ENCODE measurements at regions of chr5 and their contacts with region 1.

Region 1: DNA sequence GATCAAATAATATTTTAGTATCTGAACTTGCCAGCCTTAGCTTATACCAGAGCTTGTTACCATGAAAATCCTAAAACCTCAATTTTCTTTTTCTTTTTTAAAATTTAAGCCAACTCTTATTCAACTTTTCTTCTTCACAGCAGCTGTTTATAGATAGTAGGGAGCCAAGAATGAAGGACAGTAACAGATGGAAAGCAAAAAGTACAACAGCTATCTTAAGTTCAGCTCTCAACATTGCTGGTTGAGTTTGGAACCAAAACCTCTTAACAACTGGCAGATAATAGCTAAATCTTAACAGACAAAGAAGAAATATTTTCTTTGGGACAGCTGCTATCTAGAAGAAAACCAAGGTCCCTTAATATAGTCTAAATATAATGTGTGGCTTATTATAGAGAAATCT is 74.7 kb downstream of the PJA2 start:
- DNase-seq: no peak
- H3K27ac ChIP-seq: no peak overlapping the region
- CTCF ChIP-seq: no peak

Region 2: DNA sequence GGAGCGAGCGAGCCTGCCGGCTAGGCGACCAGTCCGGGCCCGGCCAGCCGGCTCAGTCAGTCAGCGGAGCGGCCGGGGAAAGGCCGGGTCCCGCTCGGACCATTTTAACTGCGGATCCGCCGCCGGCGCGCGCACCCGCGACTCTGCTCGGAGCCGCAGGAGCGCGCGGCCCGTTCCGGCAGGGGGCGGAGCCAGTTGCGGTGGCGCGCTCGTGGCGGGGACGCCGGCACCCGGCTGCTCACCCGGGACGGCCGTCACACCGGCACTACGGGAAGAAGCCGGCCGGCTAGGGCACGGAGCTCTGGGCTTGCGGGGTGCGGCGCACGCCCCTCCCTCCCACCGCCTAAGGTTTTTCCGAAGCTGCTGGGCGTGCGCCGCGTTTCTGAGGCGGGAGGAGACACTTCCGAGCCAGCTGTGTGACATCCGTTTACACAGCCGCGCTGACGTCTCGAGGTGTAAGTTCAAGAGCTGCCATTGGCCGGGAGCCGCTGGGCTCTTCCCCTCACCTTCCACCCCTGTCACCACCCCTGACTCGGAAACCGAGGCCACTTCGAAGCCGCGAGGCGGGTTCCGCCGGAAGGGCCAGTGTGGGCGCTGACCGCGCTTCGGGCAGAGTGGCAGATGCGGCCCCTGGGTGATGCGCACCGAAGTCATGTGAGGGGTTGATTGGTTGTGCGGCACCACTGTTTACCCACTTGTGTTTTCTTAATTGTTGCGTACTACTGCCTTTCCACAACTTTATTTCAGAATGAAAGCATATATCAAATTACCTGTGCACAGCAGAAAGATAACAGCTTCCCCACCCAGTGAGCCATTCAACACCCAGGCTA is 952.9 kb before region 1 on chr5 and contains the start of gene FBXL17:
- CTCF ChIA-PET with region 1: no interaction called
- POLR2A ChIA-PET with region 1: no interaction called
- DNase-seq: peak; percentile 91
- H3K27ac ChIP-seq: peak within 1 kb of the TSS; percentile 96
- CTCF ChIP-seq: no peak

Region 3: GRCh38 chr5:109468737-109469420 is 133.8 kb after region 1 on chr5:
- CTCF ChIA-PET with region 1: interaction called, 15 read pairs
- POLR2A ChIA-PET with region 1: no interaction called
- DNase-seq: peak; percentile 92
- H3K27ac ChIP-seq: no peak overlapping the region
- CTCF ChIP-seq: peak; percentile 97

Measured in RWPE1 (cell line).